Gastrocnemius medialis (tissue), 4 donors: ENCODE measurements at regions of chr4 and their contacts with region 1.

Region 1: GRCh38 chr4:141329174-141329569 is 108.5 kb downstream of the ZNF330 start:
- DNase-seq: peak in 1 of 2 donors; percentile 8
- ATAC-seq: peak; percentile 95 to 98
- H3K4me3 ChIP-seq: peak overlapping the region in 2 of 4 donors; percentile 4 to 34
- H3K27ac ChIP-seq: peak overlapping the region; percentile 69 to 85 (median 74)
- H3K4me1 ChIP-seq: peaks cover 9 to 17% of the 10 kb centered on the region in 2 donors
- H3K27me3 ChIP-seq: no peaks in the 10 kb centered on the region
- CTCF ChIP-seq: no peak
- POLR2A ChIP-seq: peak in 1 of 2 donors; percentile 20

Region 2: DNA sequence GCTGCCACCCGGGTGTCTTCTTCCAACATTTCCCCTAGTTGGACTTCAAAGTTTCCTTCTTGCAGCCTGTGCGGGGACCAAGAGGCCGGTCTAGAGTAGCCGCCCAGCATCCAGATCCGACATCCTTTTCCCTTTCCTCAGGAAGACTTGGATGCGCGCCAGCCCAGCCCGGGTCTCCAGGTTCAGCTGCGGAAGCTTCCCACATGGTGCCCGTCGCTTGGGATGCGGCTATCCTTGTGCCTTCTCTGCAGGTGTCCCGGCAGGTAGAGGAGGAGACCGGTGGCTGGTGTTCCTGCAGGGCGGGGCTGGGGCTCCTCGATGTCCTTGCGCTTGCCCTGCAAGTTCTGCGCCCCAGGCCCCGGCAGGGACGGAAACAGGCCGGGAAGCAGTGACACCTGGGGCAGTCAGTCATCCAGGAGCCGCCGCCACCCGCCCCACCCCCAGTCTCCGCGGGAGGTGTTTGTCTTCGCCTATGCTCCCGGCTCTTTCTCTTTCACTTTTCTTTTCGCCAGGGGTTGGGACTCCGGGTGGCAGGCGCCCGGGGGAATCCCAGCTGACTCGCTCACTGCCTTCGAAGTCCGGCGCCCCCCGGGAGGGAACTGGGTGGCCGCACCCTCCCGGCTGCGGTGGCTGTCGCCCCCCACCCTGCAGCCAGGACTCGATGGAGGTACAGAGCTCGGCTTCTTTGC is 307.1 kb after region 1 on chr4 and contains the start of gene IL15:
- in situ Hi-C with region 1: no loop called
- intact Hi-C with region 1: loop called (anchors 5 kb)
- DNase-seq: peak; percentile 52 to 85
- ATAC-seq: peak; percentile 88 to 90
- H3K4me3 ChIP-seq: peak within 1 kb of the TSS; percentile 68 to 97 (median 84)
- H3K27ac ChIP-seq: peak within 1 kb of the TSS; percentile 81 to 89 (median 86)
- H3K4me1 ChIP-seq: peaks cover 19 to 26% of the 10 kb centered on the region in 2 donors
- H3K27me3 ChIP-seq: no peaks in the 10 kb centered on the region
- CTCF ChIP-seq: no peak
- POLR2A ChIP-seq: no peak
- total RNA-seq, gene IL15: 2.1 to 6.1 (median 2.7) TPM